Mammary epithelial cell (primary cell): ENCODE measurements at regions of chr14 and their contacts with region 1.

Region 1: GRCh38 chr14:21287168-21287567 is 7.3 kb downstream of the RPGRIP1 start:
- DNase-seq: no peak
- H3K4me3 ChIP-seq: no peak overlapping the region
- H3K27ac ChIP-seq: no peak overlapping the region
- H3K4me1 ChIP-seq: no peaks in the 10 kb centered on the region
- H3K27me3 ChIP-seq: no peaks in the 10 kb centered on the region
- CTCF ChIP-seq: no peak

Region 2: GRCh38 chr14:21241218-21241819 is 45.8 kb before region 1 on chr14:
- CTCF ChIA-PET with region 1: no interaction called
- dilution Hi-C with region 1: no loop called
- in situ Hi-C with region 1: no loop called
- intact Hi-C with region 1: no loop called
- DNase-seq: no peak
- H3K4me3 ChIP-seq: no peak overlapping the region
- H3K27ac ChIP-seq: no peak overlapping the region
- H3K4me1 ChIP-seq: no peaks in the 10 kb centered on the region
- H3K27me3 ChIP-seq: no peaks in the 10 kb centered on the region
- CTCF ChIP-seq: peak; percentile 14 to 32

Region 3: GRCh38 chr14:21299562-21300130 is 12.5 kb after region 1 on chr14:
- CTCF ChIA-PET with region 1: interaction called, 12 read pairs
- dilution Hi-C with region 1: no loop called
- in situ Hi-C with region 1: no loop called
- intact Hi-C with region 1: no loop called
- DNase-seq: no peak
- H3K4me3 ChIP-seq: no peak overlapping the region
- H3K27ac ChIP-seq: no peak overlapping the region
- H3K4me1 ChIP-seq: peaks cover 2% of the 10 kb centered on the region
- H3K27me3 ChIP-seq: no peaks in the 10 kb centered on the region
- CTCF ChIP-seq: no peak